ENCODE measurements at regions of chr10 and their contacts with region 1.

Region 1: GRCh38 chr10:68156373-68157185 is 47.3 kb downstream of the MYPN start:
- DNase-seq: peak; percentile 75
- H3K4me3 Mint-ChIP-seq: no peak overlapping the region
- H3K27ac Mint-ChIP-seq: no peak overlapping the region
- H3K4me1 Mint-ChIP-seq: no peaks in the 10 kb centered on the region
- H3K27me3 Mint-ChIP-seq: peaks cover 3% of the 10 kb centered on the region

Region 2: GRCh38 chr10:67849331-67850011 is 307.1 kb before region 1 on chr10:
- CTCF ChIA-PET with region 1: interaction called, 76 read pairs
- DNase-seq: peak; percentile 97
- H3K4me3 Mint-ChIP-seq: peak overlapping the region; percentile 84
- H3K27ac Mint-ChIP-seq: peak overlapping the region; percentile 91
- H3K4me1 Mint-ChIP-seq: peaks cover 19% of the 10 kb centered on the region
- H3K27me3 Mint-ChIP-seq: no peaks in the 10 kb centered on the region

Region 3: GRCh38 chr10:67912339-67912946 is 244.1 kb before region 1 on chr10:
- CTCF ChIA-PET with region 1: no interaction called
- DNase-seq: no peak
- H3K4me3 Mint-ChIP-seq: no peak overlapping the region
- H3K27ac Mint-ChIP-seq: peak overlapping the region; percentile 13
- H3K4me1 Mint-ChIP-seq: no peaks in the 10 kb centered on the region
- H3K27me3 Mint-ChIP-seq: no peaks in the 10 kb centered on the region

Region 4: DNA sequence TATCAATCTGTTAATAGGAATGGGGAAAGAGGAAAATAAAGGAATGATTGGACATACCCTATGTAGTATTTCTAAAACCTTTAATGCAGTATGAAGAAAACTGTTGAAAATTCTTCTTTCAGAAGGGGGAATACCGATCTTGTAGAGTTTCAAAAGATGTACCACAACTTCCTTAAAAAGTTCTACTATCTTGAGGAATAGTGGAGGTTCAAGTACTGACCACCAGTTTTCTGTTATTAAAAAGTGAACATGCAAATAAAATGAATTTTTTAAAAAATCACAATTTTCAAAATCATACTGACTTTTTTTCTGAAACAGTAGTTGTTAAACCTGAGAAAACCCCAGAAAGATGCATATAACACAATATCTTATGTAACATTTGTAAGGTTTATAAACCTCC is 168.0 kb before region 1 on chr10:
- CTCF ChIA-PET with region 1: no interaction called
- DNase-seq: no peak
- H3K4me3 Mint-ChIP-seq: no peak overlapping the region
- H3K27ac Mint-ChIP-seq: no peak overlapping the region
- H3K4me1 Mint-ChIP-seq: no peaks in the 10 kb centered on the region
- H3K27me3 Mint-ChIP-seq: no peaks in the 10 kb centered on the region

Region 5: GRCh38 chr10:68137171-68137570 is 19.4 kb before region 1 on chr10:
- CTCF ChIA-PET with region 1: no interaction called
- DNase-seq: no peak
- H3K4me3 Mint-ChIP-seq: no peak overlapping the region
- H3K27ac Mint-ChIP-seq: no peak overlapping the region
- H3K4me1 Mint-ChIP-seq: no peaks in the 10 kb centered on the region
- H3K27me3 Mint-ChIP-seq: peaks cover 5% of the 10 kb centered on the region

Measured in activated naive CD4-positive, alpha-beta T cell treated with anti-CD3 and anti-CD28 coated beads, Interleukin-2, amount 10 ng/mL, durations not matched to agents 7 days and 5 days (primary cell).